Mucosa of descending colon (tissue), 3 donors: ENCODE measurements at regions of chr6 and their contacts with region 1.

Region 1: DNA sequence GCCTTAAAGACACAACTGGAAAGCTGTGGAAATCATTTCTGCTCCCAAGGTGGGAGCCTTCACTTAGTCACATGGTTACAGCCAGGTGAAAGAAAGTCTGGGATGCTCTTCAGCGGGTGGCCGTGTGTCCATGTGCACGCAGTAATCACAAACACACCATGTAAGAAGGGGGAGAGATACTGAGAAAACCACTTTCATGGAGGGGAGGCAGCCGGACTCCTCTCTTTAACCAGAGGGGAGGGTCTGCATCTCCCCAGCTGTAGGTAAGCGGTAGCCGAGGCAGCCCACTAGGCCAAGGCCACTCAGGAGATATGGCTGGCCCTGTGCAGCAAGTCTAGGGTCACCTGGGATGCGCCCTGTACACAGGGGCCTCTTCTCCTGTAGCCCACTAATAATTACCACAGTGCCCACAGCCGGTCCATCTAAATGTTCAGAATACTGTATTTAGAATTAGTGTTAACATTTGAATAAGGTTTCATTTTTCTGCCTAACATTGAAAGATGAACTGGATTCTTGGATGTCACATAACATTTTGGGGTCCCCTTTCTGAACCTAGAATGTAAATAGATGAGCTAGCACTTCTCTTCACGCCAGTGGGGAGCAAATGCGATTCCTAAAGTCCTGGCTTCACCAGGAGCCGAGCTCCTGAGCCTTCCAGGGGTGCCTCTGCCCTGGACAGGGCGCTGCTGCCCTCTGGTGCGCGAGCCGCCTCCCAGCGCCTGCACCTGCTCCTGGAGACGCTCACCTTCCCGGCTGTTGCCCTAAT is 15.9 kb downstream of the GPR31 start:
- DNase-seq: peak; percentile 67 to 80 (median 69)
- ATAC-seq: peak; percentile 89
- H3K4me3 ChIP-seq: no peak overlapping the region
- H3K4me1 ChIP-seq: peaks cover 7% of the 10 kb centered on the region
- CTCF ChIP-seq: peak; percentile 64

Region 2: DNA sequence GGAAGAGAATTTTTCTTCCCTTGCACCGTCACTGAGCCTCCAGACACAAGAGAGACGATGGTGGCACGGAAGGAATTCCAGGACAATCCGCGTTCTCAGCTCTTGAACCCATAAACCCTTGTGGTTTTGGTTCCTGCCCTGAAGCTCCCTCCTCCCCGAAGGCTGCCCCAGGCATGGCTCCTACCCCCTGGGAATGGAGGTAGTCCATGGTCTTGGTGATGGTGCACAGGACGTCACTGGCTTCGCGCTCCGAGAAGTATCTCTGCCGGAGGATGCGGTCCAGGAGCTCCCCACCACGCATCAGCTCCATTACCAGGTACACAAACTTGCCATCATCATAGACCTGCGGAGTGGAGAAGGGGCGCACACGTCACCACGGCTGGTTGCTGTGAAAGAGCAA is 711.6 kb before region 1 on chr6:
- intact Hi-C with region 1: no loop called
- DNase-seq: no peak
- ATAC-seq: no peak
- H3K4me3 ChIP-seq: no peak overlapping the region
- H3K4me1 ChIP-seq: no peaks in the 10 kb centered on the region
- CTCF ChIP-seq: no peak

Region 3: DNA sequence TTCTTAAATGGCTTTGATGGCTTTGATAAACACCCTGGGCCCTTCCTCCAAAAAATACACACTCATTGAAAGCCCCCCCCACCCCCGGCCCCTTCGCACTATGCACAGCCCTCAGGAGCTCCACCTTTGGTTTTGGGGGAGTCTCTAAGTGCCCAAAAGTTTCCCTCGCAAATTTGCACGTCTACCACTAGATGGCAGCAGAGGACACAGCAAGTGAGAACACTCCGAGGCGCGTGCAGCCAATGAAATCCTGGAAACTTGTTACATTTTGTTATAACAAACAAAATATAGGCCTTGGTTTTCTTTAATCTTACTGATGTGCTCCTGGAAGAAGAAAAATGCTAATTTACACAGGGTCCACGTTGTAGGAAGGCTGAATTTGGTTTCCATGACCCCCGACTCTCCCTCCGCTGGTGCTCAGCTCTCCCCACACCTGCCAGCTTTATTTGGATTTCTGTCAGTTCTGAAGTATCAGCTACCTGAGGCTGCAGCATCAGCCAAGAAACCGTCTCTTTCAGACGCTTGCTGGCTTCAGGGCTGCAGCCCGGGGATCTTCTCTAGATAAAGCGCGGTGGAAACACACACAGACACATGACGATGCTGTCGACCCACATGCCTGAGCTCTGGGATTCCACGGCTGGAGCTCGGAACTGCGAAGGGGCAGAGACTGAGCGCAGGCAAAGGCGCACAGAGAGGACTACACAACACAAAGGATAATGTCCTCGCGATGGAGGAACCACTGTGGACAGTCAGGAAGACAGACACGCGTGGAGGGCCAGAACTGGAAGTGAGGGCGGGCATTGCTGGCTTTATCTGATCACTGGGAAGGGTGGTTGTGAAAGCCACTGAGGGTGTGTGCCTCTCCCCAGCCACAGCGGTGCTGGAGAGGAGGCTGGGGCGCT is 366.4 kb before region 1 on chr6:
- intact Hi-C with region 1: loop called (anchors 10 kb)
- DNase-seq: peak in 2 of 3 donors; percentile 34 to 56
- ATAC-seq: peak; percentile 79
- H3K4me3 ChIP-seq: no peak overlapping the region
- H3K4me1 ChIP-seq: no peaks in the 10 kb centered on the region
- CTCF ChIP-seq: peak; percentile 73

Region 4: DNA sequence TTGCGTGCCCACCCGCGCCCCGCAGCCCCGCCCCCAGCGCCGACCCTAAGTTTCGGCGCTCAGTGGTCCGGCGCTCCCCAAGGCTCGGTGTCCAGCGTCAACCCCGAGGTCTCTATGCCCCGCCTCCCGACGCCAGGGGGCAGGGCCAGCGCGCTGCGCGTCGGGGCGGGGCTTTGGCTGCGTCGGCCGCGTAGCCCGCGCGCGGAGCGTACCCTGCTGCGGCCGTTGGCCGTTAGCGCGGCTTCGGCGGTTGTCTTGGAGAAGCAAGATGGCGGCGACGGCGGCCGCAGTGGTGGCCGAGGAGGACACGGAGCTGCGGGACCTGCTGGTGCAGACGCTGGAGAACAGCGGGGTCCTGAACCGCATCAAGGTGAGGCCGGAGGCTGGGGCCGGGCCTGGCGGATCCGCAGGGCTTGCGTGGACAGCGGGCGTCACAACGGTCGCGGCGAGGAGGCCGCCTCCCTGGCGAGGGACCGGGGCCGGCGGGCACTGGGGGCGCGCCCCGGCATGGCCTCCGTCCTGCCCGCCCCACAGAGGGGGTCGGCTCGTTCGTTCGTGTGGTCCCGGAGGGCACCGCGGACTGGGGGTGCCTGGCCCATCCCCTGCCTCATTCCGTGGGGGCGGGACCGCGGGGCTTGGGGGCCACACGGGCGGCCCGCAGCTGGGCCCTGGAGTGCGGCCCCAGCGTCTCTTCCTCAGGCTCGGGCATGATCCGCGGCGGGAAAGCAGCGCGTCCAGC is 142.5 kb before region 1 on chr6 and contains the start of gene CEP43:
- intact Hi-C with region 1: loop called in 1 of 2 experiments (anchors 10 kb)
- DNase-seq: peak; percentile 94 to 96 (median 96)
- ATAC-seq: peak; percentile 95
- H3K4me3 ChIP-seq: peak within 1 kb of the TSS; percentile 99
- H3K4me1 ChIP-seq: peaks cover 5% of the 10 kb centered on the region
- CTCF ChIP-seq: peak; percentile 34
- total RNA-seq, gene CEP43: 20.4 to 24.7 (median 24.2) TPM

Region 5: GRCh38 chr6:167103041-167103891 is 38.6 kb before region 1 on chr6:
- intact Hi-C with region 1: no loop called
- DNase-seq: no peak
- ATAC-seq: peak; percentile 84
- H3K4me3 ChIP-seq: no peak overlapping the region
- H3K4me1 ChIP-seq: no peaks in the 10 kb centered on the region
- CTCF ChIP-seq: no peak